Cardiac septum (tissue), 1 donor: ENCODE measurements at regions of chr22 and their contacts with region 1.

Region 1: DNA sequence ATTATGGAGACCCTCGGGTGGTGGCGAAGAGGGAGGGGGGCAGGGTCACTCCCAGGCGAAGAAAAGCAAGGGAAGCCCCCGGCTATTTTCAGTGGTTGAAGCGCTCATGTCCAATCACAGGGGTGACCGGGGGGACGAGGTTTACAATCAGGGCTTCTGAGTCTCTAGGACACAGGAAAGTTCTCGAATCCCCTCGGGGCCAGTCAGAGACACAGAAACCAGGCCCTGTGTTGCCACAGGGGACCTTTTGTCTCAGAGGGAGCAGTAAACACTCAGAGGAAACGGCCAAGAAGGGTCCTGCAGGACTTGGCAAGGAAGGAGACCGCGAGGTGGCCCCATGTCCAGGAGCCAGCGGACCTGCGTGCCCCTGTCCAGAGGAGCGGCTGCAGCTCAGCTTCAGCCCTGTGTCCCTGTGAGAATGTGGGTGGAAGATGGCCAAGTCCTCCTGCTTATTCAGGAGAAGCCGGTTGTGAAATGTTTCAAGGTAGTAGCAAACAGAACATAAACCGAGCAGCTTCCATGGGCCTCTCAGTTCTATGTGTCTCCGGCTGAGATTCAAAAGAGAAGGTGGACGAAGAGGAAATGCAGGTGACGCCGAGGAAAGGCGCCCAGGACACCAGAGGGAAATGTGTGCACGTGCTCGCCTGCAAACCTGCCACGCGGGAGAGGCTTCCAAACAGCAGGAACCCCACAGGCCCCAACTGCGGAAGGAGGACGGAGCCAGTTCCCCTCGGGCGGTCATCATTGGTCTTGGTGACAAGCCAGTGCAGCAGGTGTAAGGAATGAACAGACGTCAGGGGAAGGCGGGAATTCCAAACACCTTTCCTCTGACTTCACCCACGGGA is 357.6 kb downstream of the BRD1 start:
- DNase-seq: peak; percentile 54

Region 2: DNA sequence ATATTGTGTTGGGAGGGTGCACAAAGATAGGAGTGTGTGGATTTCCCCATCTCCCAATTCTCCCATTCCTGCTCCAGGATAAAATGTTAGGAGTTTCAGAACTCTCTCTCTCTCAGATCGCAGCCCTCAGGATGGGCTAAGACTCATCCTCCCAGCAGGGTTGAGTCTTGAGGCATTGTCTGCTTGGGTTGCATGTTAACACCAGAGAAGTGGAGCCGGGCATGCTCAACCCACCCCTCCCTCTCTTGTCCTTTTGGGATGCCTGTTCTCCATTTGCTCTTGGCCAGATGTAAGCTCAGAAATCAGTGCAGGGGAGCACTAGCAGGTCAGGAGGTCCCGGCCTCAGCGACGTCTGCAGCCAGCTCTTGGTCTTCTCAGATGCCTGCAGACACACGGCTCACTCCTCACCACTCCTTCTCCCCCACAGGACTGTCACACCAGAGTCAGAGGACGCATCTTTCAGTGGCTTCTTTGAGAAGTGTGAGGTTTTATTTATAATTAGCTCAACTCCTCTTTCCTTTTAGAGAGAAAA is 1251.2 kb before region 1 on chr22:
- intact Hi-C with region 1: loop called (anchors 10 kb)
- DNase-seq: no peak

Region 3: GRCh38 chr22:49502126-49502826 is 32.2 kb after region 1 on chr22:
- intact Hi-C with region 1: no loop called
- DNase-seq: peak; percentile 20

Region 4: GRCh38 chr22:49548356-49549211 is 78.5 kb after region 1 on chr22:
- intact Hi-C with region 1: no loop called
- DNase-seq: peak; percentile 39

Region 5: GRCh38 chr22:49670456-49671330 is 200.6 kb after region 1 on chr22:
- intact Hi-C with region 1: no loop called
- DNase-seq: no peak